ENCODE measurements at regions of chr5 and their contacts with region 1.

Region 1: DNA sequence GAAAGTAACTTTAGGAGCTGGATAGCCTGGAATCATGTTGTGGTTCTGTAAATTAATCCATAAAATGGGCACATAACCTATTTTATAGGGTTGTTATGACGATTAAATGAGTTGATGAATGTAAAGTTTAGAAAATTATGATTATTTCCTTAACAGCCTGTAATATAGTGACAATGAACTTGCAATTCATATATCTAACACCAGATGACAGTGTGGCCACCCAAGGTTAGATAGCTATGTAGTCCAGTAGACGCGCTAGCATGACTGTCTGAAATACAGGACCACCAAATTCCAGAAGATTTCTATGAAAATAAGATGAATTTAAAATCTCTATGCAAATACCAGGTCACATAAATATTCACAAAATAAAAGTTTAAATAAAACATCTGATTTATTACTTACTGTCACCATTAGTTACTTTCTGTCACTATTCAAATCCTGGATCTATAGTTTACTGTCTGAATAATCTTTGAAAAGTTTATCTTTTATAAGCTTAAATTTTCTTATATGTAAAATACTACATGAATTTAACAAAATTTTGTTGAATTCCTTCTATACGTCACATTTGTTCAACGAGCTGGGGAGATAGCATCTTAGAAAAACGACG is 26.1 kb upstream of the MACIR start:
- DNase-seq: no peak
- ATAC-seq: peak; percentile 84
- H3K4me3 Mint-ChIP-seq: no peak overlapping the region
- H3K27ac Mint-ChIP-seq: no peak overlapping the region
- H3K4me1 Mint-ChIP-seq: no peaks in the 10 kb centered on the region
- H3K27me3 Mint-ChIP-seq: no peaks in the 10 kb centered on the region
- CTCF ChIP-seq: peak; percentile 50

Region 2: GRCh38 chr5:103428411-103428871 is 195.9 kb after region 1 on chr5:
- CTCF ChIA-PET with region 1: no interaction called
- POLR2A ChIA-PET with region 1: no interaction called
- DNase-seq: no peak
- ATAC-seq: no peak
- H3K4me3 Mint-ChIP-seq: no peak overlapping the region
- H3K27ac Mint-ChIP-seq: no peak overlapping the region
- H3K4me1 Mint-ChIP-seq: peaks cover 6% of the 10 kb centered on the region
- H3K27me3 Mint-ChIP-seq: no peaks in the 10 kb centered on the region
- CTCF ChIP-seq: no peak

Region 3: DNA sequence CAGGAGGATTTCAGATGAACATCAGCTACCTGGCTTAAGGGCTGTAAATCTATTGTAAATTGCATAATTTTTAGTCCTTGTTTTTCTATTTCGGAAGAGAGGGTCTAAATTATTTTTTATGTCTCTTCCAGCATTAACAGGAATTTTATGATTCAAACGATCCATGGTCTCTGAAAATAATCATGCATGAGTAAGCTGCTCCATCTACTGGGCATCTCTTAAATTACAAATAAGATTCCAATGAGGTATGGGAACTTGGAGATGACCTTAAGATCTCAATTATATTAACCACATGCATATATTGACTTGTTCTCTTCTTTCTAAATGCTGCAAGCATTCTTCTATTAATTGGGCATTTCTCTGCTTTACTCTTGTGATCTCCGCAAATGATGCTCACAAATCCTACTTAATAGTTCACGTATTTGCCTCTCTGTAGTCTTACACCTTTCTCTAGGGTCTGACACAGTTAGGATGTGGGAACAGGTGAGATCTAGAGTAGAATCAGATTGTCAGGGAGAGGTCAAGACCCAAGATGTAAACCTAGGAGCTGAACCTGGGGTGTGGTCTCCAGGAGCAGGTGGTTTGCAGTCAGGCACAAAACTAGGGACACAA is 243.2 kb after region 1 on chr5:
- CTCF ChIA-PET with region 1: interaction called, 24 read pairs
- POLR2A ChIA-PET with region 1: no interaction called
- DNase-seq: no peak
- ATAC-seq: peak; percentile 81
- H3K4me3 Mint-ChIP-seq: no peak overlapping the region
- H3K27ac Mint-ChIP-seq: no peak overlapping the region; the same call in 1 of the 2 replicates
- H3K4me1 Mint-ChIP-seq: peaks cover 24% of the 10 kb centered on the region
- H3K27me3 Mint-ChIP-seq: no peaks in the 10 kb centered on the region
- CTCF ChIP-seq: 0 out of 2 replicates have a peak, but pooled peaks have one; percentile 14

Region 4: GRCh38 chr5:103519550-103519949 is 287.1 kb after region 1 on chr5:
- CTCF ChIA-PET with region 1: interaction called, 13 read pairs
- POLR2A ChIA-PET with region 1: no interaction called
- DNase-seq: peak; percentile 27
- ATAC-seq: peak; percentile 83
- H3K4me3 Mint-ChIP-seq: no peak overlapping the region
- H3K27ac Mint-ChIP-seq: no peak overlapping the region
- H3K4me1 Mint-ChIP-seq: peaks cover 10% of the 10 kb centered on the region
- H3K27me3 Mint-ChIP-seq: no peaks in the 10 kb centered on the region
- CTCF ChIP-seq: peak; percentile 14; the same call in 1 of the 2 replicates